CD8-positive, alpha-beta memory T cell (primary cell): ENCODE measurements at regions of chr16 and their contacts with region 1.

Region 1: DNA sequence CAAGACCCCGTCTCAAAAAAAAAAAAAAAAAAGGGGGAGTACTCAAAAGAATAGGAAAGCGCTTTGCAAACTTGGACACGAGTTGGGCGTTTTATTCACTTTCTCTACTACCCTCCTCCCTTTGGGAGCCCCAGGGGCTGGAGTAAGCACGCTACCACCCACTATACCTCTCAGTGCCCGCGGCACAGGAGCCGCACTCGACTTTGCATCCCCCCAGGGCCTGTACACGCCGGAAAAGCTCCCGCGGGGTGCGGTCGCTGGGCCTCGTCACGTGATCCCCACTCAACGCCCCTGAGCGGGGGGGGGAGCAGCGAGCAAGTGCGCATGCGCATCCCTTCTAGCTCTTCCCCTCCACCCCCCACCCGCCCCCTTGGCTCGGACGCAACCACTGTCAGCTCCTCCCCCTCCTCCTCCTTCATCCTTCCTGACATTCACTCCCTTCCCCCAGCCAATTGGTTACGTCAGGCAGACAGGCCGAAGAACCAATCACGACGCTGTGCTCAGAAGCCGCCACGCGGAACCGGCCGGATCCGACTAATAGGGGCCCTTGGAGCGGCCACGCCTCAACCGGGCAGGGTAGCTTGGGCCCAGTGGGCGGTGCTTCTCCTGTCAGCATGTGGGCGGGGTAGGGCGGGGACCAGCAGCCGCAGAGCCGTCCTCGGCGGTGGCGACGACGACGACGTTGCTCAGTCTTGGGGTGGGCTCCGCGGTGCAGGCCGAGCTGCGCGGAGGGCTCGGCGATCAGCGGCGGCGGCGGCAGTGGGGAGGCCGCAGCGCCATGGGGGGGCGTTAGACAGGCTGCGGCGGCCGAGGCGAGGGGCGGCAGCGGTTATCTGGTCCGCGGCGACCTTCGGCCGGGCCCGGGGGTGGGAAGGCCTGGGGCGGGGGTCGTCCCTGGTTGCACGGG is at the start of gene HAPSTR1:
- DNase-seq: peak; percentile 98 to 100 (median 100)
- H3K4me3 ChIP-seq: peak within 1 kb of the TSS; percentile 94
- H3K4me3 Mint-ChIP-seq: peak within 1 kb of the TSS; percentile 95 to 100 (median 99)
- H3K27ac ChIP-seq: peak within 1 kb of the TSS; percentile 90
- H3K27ac Mint-ChIP-seq: peak within 1 kb of the TSS; percentile 93 to 99 (median 97)
- H3K4me1 ChIP-seq: peaks cover 32% of the 10 kb centered on the region
- H3K4me1 Mint-ChIP-seq: peaks cover 39 to 44% (median 40%) of the 10 kb centered on the region in 3 donors
- H3K27me3 ChIP-seq: no peaks in the 10 kb centered on the region
- H3K27me3 Mint-ChIP-seq: peaks cover 0 to 6% of the 10 kb centered on the region in 2 donors
- total RNA-seq, gene HAPSTR1: 60.4 to 61.2 TPM

Region 2: GRCh38 chr16:8868416-8869211 is 222.6 kb before region 1 on chr16 and contains the start of gene CARHSP1:
- CTCF ChIA-PET with region 1: no interaction called
- POLR2A ChIA-PET with region 1: interaction called, 16 read pairs
- DNase-seq: peak; percentile 70 to 81 (median 80)
- H3K4me3 ChIP-seq: peak within 1 kb of the TSS; percentile 77
- H3K4me3 Mint-ChIP-seq: peak within 1 kb of the TSS; percentile 84 to 97 (median 95)
- H3K27ac ChIP-seq: peak within 1 kb of the TSS; percentile 68
- H3K27ac Mint-ChIP-seq: peak within 1 kb of the TSS; percentile 63 to 96 (median 88)
- H3K4me1 ChIP-seq: peaks cover 30% of the 10 kb centered on the region
- H3K4me1 Mint-ChIP-seq: peaks cover 45 to 58% (median 47%) of the 10 kb centered on the region in 3 donors
- H3K27me3 ChIP-seq: no peaks in the 10 kb centered on the region
- H3K27me3 Mint-ChIP-seq: no peaks in the 10 kb centered on the region
- total RNA-seq, gene CARHSP1: 52.6 to 57.8 TPM

Region 3: GRCh38 chr16:8920645-8921346 is 170.4 kb before region 1 on chr16:
- CTCF ChIA-PET with region 1: no interaction called
- POLR2A ChIA-PET with region 1: interaction called, 17 read pairs
- DNase-seq: no peak
- H3K4me3 ChIP-seq: no peak overlapping the region
- H3K4me3 Mint-ChIP-seq: no peak overlapping the region
- H3K27ac ChIP-seq: no peak overlapping the region
- H3K27ac Mint-ChIP-seq: no peak overlapping the region
- H3K4me1 ChIP-seq: peaks cover 14% of the 10 kb centered on the region
- H3K4me1 Mint-ChIP-seq: peaks cover 35 to 63% (median 52%) of the 10 kb centered on the region in 3 donors
- H3K27me3 ChIP-seq: no peaks in the 10 kb centered on the region
- H3K27me3 Mint-ChIP-seq: no peaks in the 10 kb centered on the region

Region 4: DNA sequence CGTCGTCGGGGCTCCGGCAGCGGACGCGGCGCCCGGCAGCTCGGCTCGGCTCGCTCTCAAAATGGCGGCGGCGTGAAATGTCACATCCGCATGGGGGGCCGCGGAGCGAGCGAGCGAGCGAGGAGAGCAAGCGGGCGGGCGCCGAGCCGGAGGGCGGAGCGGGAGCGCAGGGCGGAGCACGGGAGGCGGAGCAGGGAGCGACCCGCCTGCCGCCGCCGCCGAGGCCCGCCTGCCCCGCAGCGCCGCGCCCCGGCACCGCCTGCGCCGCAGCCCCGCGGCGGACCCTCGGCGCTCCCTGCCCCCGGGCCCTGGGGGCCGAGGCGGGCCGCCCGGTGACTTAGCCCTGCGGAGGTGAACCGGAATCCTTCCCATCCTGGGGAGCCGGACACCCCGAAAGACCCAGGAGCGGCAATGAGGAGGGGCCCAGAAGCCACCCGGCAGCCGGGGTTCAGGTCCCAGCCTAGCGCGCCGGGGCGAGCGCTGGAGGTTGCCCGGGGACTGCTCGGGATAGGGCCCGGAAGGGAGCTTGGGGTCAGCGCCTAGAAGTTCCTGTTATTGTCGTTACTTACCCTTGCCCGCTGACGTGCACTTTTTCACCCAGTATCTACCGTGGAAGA is 127.3 kb before region 1 on chr16 and contains the start of gene USP7:
- CTCF ChIA-PET with region 1: interaction called, 3 read pairs
- POLR2A ChIA-PET with region 1: interaction called, 23 read pairs
- DNase-seq: peak; percentile 87 to 93 (median 89)
- H3K4me3 ChIP-seq: peak within 1 kb of the TSS; percentile 69
- H3K4me3 Mint-ChIP-seq: peak within 1 kb of the TSS; percentile 93 to 98 (median 97)
- H3K27ac ChIP-seq: peak within 1 kb of the TSS; percentile 72
- H3K27ac Mint-ChIP-seq: peak within 1 kb of the TSS; percentile 82 to 98 (median 96)
- H3K4me1 ChIP-seq: peaks cover 32% of the 10 kb centered on the region
- H3K4me1 Mint-ChIP-seq: peaks cover 38 to 41% (median 41%) of the 10 kb centered on the region in 3 donors
- H3K27me3 ChIP-seq: no peaks in the 10 kb centered on the region
- H3K27me3 Mint-ChIP-seq: peaks cover 5 to 7% of the 10 kb centered on the region in 2 donors
- total RNA-seq, gene USP7: 189 to 192 TPM

Region 5: GRCh38 chr16:9077091-9077809 is 14.0 kb before region 1 on chr16:
- CTCF ChIA-PET with region 1: interaction called, 5 read pairs
- POLR2A ChIA-PET with region 1: interaction called, 27 read pairs
- DNase-seq: no peak
- H3K4me3 ChIP-seq: no peak overlapping the region
- H3K4me3 Mint-ChIP-seq: peak overlapping the region in 1 of 7 donors; percentile 16
- H3K27ac ChIP-seq: peak overlapping the region; percentile 59
- H3K27ac Mint-ChIP-seq: peak overlapping the region in 1 of 8 donors; percentile 42
- H3K4me1 ChIP-seq: peaks cover 19% of the 10 kb centered on the region
- H3K4me1 Mint-ChIP-seq: peaks cover 14 to 27% (median 27%) of the 10 kb centered on the region in 3 donors
- H3K27me3 ChIP-seq: no peaks in the 10 kb centered on the region
- H3K27me3 Mint-ChIP-seq: peaks cover 3 to 4% of the 10 kb centered on the region in 2 donors